ENCODE measurements at regions of chr20 and their contacts with region 1.

Region 1: DNA sequence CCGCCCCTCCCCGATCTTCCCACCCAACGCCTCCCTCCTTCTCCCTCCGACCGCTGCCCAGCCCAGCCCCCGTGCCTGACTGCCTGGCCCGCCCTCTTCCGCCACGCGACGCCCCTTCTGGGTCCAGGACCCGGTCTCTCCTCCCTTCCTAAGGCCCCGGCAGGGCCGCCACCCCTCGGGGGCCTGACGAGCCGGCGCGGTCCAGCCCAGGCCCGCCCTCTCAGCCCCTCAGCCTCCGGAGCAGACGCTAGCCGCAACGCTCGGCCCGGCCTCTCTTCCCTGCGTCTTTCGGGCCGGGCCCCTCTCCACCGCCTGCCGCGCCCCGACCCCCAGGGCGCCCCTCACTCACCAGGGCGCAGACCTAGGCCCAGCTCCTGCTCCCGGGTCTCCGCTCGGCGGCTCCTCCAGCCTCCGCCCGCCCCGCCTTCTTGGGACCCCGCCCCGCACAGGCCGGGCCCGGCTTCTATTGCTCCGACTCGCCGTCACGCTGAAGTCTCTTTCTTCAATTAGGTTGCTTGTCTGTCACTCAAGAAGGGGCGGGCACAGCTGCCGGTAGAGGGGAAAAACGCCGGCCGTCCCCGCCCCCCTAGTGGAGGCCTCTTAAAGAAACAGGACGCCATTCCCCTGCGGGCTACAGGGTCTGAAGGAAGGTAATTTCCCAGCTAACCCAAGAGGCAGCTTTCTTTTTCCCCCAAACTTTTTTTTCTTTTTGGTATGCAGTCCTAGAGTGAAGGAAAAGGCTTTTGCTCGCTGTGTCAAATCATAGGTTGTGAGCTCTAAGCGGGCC is at the start of gene ELMO2:
- DNase-seq: peak; percentile 96 to 98 (median 98)
- H3K4me3 ChIP-seq: peak within 1 kb of the TSS; percentile 81 to 89 (median 86)
- H3K27ac ChIP-seq: peak within 1 kb of the TSS; percentile 68 to 84
- H3K4me1 ChIP-seq: peaks cover 18 to 50% (median 40%) of the 10 kb centered on the region in 4 experiments
- H3K27me3 ChIP-seq: no peaks in the 10 kb centered on the region

Region 2: GRCh38 chr20:46363800-46364634 is 42.4 kb before region 1 on chr20:
- CTCF ChIA-PET with region 1: interaction called, 6 read pairs
- POLR2A ChIA-PET with region 1: interaction called, 16 read pairs
- DNase-seq: peak; percentile 88 to 92 (median 91)
- H3K4me3 ChIP-seq: peak overlapping the region; percentile 65 to 93 (median 87)
- H3K27ac ChIP-seq: peak overlapping the region; percentile 98
- H3K4me1 ChIP-seq: peaks cover 27 to 70% (median 52%) of the 10 kb centered on the region in 4 experiments
- H3K27me3 ChIP-seq: no peaks in the 10 kb centered on the region

Region 3: GRCh38 chr20:46446851-46447250 is 40.5 kb after region 1 on chr20:
- CTCF ChIA-PET with region 1: no interaction called
- POLR2A ChIA-PET with region 1: no interaction called
- DNase-seq: no peak
- H3K4me3 ChIP-seq: no peak overlapping the region
- H3K27ac ChIP-seq: no peak overlapping the region
- H3K4me1 ChIP-seq: peaks cover 3 to 19% (median 15%) of the 10 kb centered on the region in 4 experiments
- H3K27me3 ChIP-seq: peaks cover 0 to 3% (median 0%) of the 10 kb centered on the region in 5 experiments

Measured in common myeloid progenitor, CD34-positive (primary cell).